Activated CD4-positive, alpha-beta T cell treated with anti-CD3 and anti-CD28 coated beads, Interleukin-2, amount 10 ng/mL, durations not matched to agents 7 days and 5 days (primary cell): ENCODE measurements at regions of chr3 and their contacts with region 1.

Region 1: DNA sequence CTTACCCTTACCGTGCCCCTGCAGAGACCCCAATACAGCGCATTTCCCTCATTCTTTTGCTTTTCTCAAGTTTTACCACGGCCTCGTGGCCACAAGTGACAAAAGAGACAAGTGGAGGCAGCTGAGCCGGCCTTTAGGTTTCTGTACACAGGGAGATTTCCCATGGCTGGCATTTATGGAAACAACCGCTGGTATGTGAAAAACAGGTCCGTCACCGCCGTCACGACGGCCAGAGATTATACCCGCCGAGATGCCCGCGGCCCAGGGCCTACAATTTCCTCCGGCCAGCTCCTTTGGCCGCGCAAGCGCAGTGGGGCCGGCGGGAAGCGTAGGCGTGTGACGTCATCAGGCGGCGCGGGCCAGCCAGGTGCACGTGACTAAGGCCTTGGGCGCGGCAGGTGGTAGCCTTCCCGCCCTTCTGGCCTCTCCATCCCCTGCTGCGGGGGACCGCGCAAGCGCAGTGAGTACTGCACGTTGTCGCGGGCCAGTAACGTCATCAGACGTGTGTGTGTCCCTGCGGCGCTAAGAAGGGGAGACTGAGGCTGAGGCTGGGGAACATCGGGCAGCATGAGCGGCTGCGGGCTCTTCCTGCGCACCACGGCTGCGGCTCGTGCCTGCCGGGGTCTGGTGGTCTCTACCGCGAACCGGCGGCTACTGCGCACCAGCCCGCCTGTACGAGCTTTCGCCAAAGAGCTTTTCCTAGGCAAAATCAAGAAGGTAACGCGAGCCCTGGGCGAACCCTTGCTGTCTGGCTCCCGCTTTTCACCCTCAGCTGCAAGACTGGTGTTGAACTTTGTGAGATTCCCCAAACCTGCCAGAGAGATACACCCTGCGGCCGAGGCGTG is at the start of gene ACAD9:
- DNase-seq: peak; percentile 97
- H3K4me3 Mint-ChIP-seq: peak within 1 kb of the TSS; percentile 91
- H3K27ac Mint-ChIP-seq: peak within 1 kb of the TSS; percentile 98
- H3K4me1 Mint-ChIP-seq: peaks cover 61% of the 10 kb centered on the region
- H3K27me3 Mint-ChIP-seq: peaks cover 3% of the 10 kb centered on the region
- total RNA-seq, gene ACAD9: 74.7 to 77.4 TPM

Region 2: GRCh38 chr3:128835096-128835495 is 44.3 kb before region 1 on chr3:
- CTCF ChIA-PET with region 1: no interaction called
- POLR2A ChIA-PET with region 1: no interaction called
- DNase-seq: no peak
- H3K4me3 Mint-ChIP-seq: no peak overlapping the region
- H3K27ac Mint-ChIP-seq: no peak overlapping the region
- H3K4me1 Mint-ChIP-seq: no peaks in the 10 kb centered on the region
- H3K27me3 Mint-ChIP-seq: peaks cover 2% of the 10 kb centered on the region

Region 3: DNA sequence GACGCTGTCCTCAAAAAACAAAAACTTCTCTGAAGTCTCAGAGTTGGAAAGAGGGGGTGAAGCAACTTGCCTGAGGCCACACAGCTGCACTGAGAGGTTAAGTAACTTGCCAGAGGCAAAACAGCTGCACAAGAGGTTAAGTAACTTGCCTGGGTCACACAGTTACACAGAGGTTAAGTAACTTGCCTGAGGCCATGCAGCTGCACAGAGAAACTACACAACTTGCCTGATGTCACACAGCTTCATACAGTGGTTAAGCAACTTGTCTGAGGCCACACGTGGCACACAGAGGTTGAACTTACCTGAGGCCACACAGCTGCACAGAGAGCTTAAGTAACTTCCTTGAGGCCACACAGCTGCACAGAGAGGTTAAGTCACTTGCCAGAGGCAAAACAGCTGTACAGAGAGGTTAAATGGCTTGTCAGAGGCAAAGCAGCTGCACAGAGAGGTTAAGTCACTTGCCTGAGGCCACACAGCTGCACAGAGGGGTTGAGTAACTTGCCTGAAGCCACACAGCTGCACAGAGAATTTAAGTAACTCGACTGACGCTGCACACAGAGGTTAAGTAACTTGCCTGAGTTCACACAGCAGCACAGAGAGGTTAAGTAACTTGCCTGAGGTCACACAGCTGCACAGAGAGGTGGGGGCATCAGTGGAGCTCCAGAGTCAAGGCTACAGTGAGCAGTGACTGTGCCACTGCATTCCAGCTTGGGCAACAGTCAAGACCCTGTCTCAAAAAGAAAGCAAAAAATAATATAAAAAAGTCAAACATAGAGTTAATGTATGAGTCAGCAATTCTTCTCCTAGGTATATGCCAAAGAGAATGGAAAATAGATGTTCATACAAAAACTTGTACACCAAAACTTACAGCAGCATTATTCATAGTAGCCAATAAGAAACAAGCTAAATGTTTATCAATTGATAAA is 11.9 kb before region 1 on chr3:
- CTCF ChIA-PET with region 1: interaction called, 23 read pairs
- POLR2A ChIA-PET with region 1: no interaction called
- DNase-seq: no peak
- H3K4me3 Mint-ChIP-seq: no peak overlapping the region
- H3K27ac Mint-ChIP-seq: no peak overlapping the region
- H3K4me1 Mint-ChIP-seq: no peaks in the 10 kb centered on the region
- H3K27me3 Mint-ChIP-seq: no peaks in the 10 kb centered on the region